Activated T-helper 1 cell treated with anti-CD3 and anti-CD28 coated beads, Interleukin-12 subunit alpha, Interleukin-12 subunit beta, Interleukin-2, Interleukin-4 antibody, amounts not matched to agents 30 ng/mL and 10 ng/mL and 1 ng/mL, durations not matched to agents 14 hours and 24 hours and 36 hours (primary cell): ENCODE measurements at regions of chr1 and their contacts with region 1.

Region 1: GRCh38 chr1:115112496-115113375 is 23.4 kb upstream of the TSPAN2 start:
- DNase-seq: peak; percentile 20
- H3K4me3 Mint-ChIP-seq: no peak overlapping the region
- H3K27ac Mint-ChIP-seq: no peak overlapping the region
- H3K4me1 Mint-ChIP-seq: no peaks in the 10 kb centered on the region
- H3K27me3 Mint-ChIP-seq: peaks cover 5% of the 10 kb centered on the region

Region 2: GRCh38 chr1:114997510-114998289 is 115.0 kb before region 1 on chr1:
- intact Hi-C with region 1: no loop called
- DNase-seq: no peak
- H3K4me3 Mint-ChIP-seq: no peak overlapping the region
- H3K27ac Mint-ChIP-seq: no peak overlapping the region
- H3K4me1 Mint-ChIP-seq: no peaks in the 10 kb centered on the region
- H3K27me3 Mint-ChIP-seq: peaks cover 18% of the 10 kb centered on the region

Region 3: GRCh38 chr1:115052454-115053083 is 60.2 kb before region 1 on chr1:
- intact Hi-C with region 1: loop called (anchors 1 kb)
- DNase-seq: peak; percentile 20
- H3K4me3 Mint-ChIP-seq: no peak overlapping the region
- H3K27ac Mint-ChIP-seq: no peak overlapping the region
- H3K4me1 Mint-ChIP-seq: peaks cover 13% of the 10 kb centered on the region
- H3K27me3 Mint-ChIP-seq: peaks cover 6% of the 10 kb centered on the region